RWPE1 (cell line): ENCODE measurements at regions of chr9 and their contacts with region 1.

Region 1: GRCh38 chr9:114098016-114098935 is 816 bp downstream of the KIF12 start:
- DNase-seq: peak; percentile 79
- H3K27ac ChIP-seq: no peak overlapping the region
- CTCF ChIP-seq: no peak

Region 2: GRCh38 chr9:114082017-114082762 is 16.1 kb before region 1 on chr9:
- CTCF ChIA-PET with region 1: interaction called, 16 read pairs
- POLR2A ChIA-PET with region 1: no interaction called
- DNase-seq: peak; percentile 95
- H3K27ac ChIP-seq: no peak overlapping the region
- CTCF ChIP-seq: peak; percentile 98